ENCODE measurements at regions of chr5 and their contacts with region 1.

Region 1: DNA sequence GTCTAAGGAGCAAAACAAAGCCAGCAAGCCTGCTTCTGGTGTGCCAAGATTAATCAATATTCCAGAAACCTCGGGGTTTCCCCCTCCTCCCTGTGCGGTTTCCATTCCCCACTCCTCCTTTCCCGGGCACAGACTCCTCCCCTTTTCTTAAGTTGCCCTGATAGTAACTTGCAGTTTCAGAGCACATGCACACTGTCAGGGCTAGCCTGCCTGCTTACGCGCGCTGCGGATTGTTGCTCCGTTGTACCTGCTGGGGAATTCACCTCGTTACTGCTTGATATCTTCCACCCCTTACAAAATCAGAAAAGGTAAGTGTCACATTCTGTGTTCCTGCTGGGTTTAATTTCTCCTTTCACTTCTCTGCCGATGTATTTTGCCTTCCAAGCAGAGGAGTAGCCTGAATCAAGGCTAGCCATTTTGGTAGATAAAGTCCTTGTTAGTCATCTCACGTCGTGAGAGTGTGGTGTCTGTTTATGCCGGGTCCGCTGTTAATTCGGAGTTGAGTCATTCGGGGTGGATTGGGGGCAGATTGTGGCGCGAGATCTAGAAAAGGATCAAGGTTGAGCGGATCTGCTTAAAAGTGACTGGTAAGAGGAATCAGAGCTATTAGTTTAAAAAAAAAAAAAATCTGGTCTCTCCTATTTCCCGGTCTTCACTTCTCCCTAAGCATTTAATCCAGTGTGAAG is at the start of gene SLC1A3:
- DNase-seq: peak; percentile 29 to 41
- ATAC-seq: peak; percentile 73 to 92 (median 87)
- H3K4me3 ChIP-seq: peak within 1 kb of the TSS; percentile 32 to 67 (median 60)
- H3K27ac ChIP-seq: peak within 1 kb of the TSS; percentile 75 to 90 (median 86)
- H3K4me1 ChIP-seq: peaks cover 0 to 55% (median 9%) of the 10 kb centered on the region in 9 donors
- H3K27me3 ChIP-seq: peaks cover 0 to 14% (median 0%) of the 10 kb centered on the region in 7 donors
- CTCF ChIP-seq: no peak
- total RNA-seq, gene SLC1A3: 39.5 to 83.6 (median 58.5) TPM

Region 2: DNA sequence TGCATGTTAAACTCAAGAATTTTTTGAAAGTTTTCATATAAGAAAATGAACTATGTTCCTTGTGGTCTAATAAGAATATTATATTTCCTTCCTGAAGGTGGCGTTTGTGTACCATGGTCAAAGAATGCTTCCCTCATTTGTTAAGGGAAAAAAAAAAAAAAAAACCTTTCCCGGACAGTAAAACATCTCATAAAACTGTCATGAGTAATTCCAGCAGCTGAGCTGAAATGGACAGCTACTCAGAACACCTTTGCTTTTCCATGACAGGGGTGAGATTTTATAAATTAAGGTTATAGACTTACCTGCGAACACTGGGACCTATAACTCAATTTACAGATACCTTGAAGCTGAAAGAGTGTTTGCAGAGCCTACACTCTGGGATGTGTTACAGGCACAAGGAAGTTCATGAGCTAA is 191.7 kb before region 1 on chr5:
- intact Hi-C with region 1: loop called in 6 of 10 experiments (anchors 5 to 10 kb)
- DNase-seq: no peak
- ATAC-seq: peak in 6 of 8 donors; percentile 43 to 61 (median 52)
- H3K4me3 ChIP-seq: no peak overlapping the region
- H3K27ac ChIP-seq: no peak overlapping the region
- H3K4me1 ChIP-seq: peaks cover 0 to 7% (median 4%) of the 10 kb centered on the region in 9 donors
- H3K27me3 ChIP-seq: no peaks in the 10 kb centered on the region
- CTCF ChIP-seq: peak; percentile 28 to 66 (median 50)

Region 3: DNA sequence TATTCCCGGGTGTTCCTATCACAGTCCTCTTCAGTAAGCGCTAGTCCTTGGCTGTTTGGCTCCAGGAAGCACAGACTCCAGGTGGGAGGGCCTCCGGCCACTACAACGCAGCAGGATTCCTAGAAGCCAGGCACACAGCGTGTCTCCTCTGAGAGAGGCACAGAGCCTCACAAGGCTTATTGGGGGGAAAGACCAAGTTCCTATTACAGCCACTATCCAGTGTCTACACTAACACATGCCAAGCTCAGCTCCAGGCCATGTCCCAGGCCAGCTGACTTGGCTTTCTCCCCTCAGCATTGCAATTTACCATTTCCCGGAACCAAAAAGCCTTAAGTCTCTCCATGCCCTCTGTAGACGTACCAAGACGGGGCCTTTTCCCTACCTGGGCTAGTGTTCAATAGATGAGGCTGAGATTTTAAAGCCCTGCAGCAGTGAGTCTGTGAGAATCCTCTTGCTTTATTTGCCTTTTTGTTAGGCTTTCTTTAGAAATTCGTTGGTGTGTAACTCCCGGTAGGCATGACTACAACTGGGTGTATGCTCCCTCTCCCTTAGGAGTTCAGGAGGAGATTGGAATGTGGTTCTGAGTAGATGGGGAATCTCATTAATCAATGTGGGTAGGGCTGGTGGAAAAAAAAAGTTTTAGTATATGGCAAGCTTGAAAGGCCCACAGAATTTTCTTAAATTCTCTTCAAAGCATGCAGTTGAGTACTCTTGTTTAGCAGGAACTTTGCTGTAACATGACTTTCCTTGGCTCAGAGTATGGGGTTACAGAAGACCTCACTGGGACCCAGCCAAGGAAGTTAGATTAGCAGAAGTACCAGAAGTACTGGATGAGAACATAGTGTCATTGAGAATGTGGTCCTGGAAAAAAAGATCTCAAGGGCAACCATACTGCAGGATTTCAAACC is 84.5 kb before region 1 on chr5:
- intact Hi-C with region 1: loop called in 2 of 10 experiments (anchors 5 kb)
- DNase-seq: peak in 1 of 2 donors; percentile 48
- ATAC-seq: peak; percentile 56 to 96 (median 90)
- H3K4me3 ChIP-seq: no peak overlapping the region
- H3K27ac ChIP-seq: peak overlapping the region in 9 of 10 donors; percentile 54 to 81 (median 61)
- H3K4me1 ChIP-seq: peaks cover 0 to 26% (median 12%) of the 10 kb centered on the region in 9 donors
- H3K27me3 ChIP-seq: no peaks in the 10 kb centered on the region
- CTCF ChIP-seq: no peak

Region 4: DNA sequence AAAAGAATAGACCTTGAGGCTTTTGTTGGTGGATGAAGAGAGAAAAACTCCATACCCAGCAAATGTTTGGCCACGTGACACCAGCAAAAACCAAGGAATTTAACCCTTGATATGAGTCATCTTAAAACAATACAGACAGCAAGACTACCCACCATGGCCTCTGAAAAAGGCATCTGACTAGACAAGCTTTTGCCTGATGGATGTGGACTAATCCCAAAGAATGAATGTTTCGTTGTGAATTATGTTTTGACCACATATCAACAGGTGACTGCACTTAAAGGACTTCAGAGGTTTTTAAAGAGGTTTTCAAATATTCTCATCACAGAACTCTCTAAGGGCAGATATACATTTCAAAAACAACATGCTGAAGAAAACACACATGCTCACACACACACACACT is 33.1 kb before region 1 on chr5:
- intact Hi-C with region 1: loop called in 1 of 10 experiments (anchors 5 kb)
- DNase-seq: no peak
- ATAC-seq: no peak
- H3K4me3 ChIP-seq: no peak overlapping the region
- H3K27ac ChIP-seq: no peak overlapping the region
- H3K4me1 ChIP-seq: peaks cover 3 to 34% (median 19%) of the 10 kb centered on the region in 9 donors
- H3K27me3 ChIP-seq: no peaks in the 10 kb centered on the region
- CTCF ChIP-seq: no peak

Region 5: DNA sequence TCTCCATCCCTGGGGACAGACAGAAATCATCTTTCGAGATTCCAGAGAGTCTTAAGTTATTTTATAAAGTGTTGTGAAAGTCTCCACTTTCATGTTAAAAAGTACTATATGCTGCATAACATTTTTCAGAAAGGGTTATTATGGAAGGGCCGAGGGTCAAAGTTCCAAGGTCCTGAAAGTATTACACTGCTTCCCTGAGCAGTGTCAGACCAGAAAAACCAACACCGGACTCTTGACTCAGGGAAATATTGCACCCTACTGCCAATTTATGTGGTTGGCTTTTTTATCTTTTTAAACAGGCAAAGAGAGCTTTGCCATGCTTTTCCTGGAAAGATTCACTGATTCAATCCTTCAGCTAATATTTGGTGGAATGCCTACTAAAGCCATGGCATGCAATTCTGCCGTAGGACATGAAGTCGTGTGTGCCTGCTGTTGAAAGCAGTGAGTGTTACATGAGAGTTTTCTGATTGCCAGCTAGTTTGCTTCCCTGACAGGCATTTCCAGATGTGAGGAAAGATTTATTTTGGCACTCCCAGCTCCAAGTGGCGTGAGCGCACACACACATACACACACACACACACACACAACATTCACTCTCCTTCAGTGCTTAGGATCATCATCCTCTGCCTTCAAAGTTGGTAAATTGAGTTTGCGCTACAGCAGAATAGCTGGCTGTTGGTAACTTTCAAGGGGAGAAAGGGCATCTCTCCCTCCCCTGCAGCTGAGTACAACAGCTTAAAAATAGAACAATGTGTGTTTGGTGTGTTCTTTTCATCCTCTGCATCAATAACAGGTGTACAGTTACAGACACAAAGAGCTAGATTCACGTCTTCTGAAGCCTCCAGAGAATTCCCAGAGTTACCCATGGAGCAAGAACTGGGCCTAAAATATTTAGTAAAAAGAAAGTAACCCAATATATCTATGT is 45.5 kb after region 1 on chr5:
- intact Hi-C with region 1: loop called in 3 of 10 experiments (anchors 5 kb)
- DNase-seq: no peak
- ATAC-seq: peak; percentile 59 to 89 (median 78)
- H3K4me3 ChIP-seq: no peak overlapping the region
- H3K27ac ChIP-seq: peak overlapping the region; percentile 20 to 80 (median 68)
- H3K4me1 ChIP-seq: peaks cover 0 to 50% (median 29%) of the 10 kb centered on the region in 9 donors
- H3K27me3 ChIP-seq: no peaks in the 10 kb centered on the region
- CTCF ChIP-seq: no peak

Region 6: GRCh38 chr5:36657563-36657995 is 51.0 kb after region 1 on chr5:
- intact Hi-C with region 1: loop called in 3 of 10 experiments (anchors 5 kb)
- DNase-seq: peak in 1 of 2 donors; percentile 76
- ATAC-seq: peak; percentile 85 to 95 (median 91)
- H3K4me3 ChIP-seq: no peak overlapping the region
- H3K27ac ChIP-seq: peak overlapping the region; percentile 42 to 83 (median 72)
- H3K4me1 ChIP-seq: peaks cover 3 to 61% (median 42%) of the 10 kb centered on the region in 9 donors
- H3K27me3 ChIP-seq: no peaks in the 10 kb centered on the region
- CTCF ChIP-seq: no peak

Region 7: GRCh38 chr5:37153661-37154060 is 547.1 kb after region 1 on chr5:
- intact Hi-C with region 1: loop called in 1 of 10 experiments (anchors 5 kb)
- DNase-seq: no peak
- ATAC-seq: no peak
- H3K4me3 ChIP-seq: no peak overlapping the region
- H3K27ac ChIP-seq: no peak overlapping the region
- H3K4me1 ChIP-seq: peaks cover 0 to 3% (median 0%) of the 10 kb centered on the region in 9 donors
- H3K27me3 ChIP-seq: no peaks in the 10 kb centered on the region
- CTCF ChIP-seq: no peak